WTC11 (cell line): ENCODE measurements at regions of chr15 and their contacts with region 1.

Region 1: GRCh38 chr15:101070502-101071273 is 151.5 kb downstream of the LRRK1 start:
- DNase-seq: no peak
- ATAC-seq: peak; percentile 6; the same call in 1 of the 2 replicates
- H3K4me3 Mint-ChIP-seq: peak overlapping the region; percentile 14; the same call in 1 of the 2 replicates
- H3K27ac Mint-ChIP-seq: peak overlapping the region; percentile 98
- H3K4me1 Mint-ChIP-seq: peaks cover 62% of the 10 kb centered on the region
- H3K27me3 Mint-ChIP-seq: peaks cover 17% of the 10 kb centered on the region
- CTCF ChIP-seq: no peak

Region 2: GRCh38 chr15:101014921-101015841 is 55.5 kb before region 1 on chr15:
- CTCF ChIA-PET with region 1: interaction called, 53 read pairs
- POLR2A ChIA-PET with region 1: no interaction called
- DNase-seq: peak; percentile 87
- ATAC-seq: peak; percentile 81
- H3K4me3 Mint-ChIP-seq: no peak overlapping the region
- H3K27ac Mint-ChIP-seq: no peak overlapping the region
- H3K4me1 Mint-ChIP-seq: peaks cover 53% of the 10 kb centered on the region
- H3K27me3 Mint-ChIP-seq: no peaks in the 10 kb centered on the region; the same call in 1 of the 2 replicates
- CTCF ChIP-seq: peak; percentile 89

Region 3: GRCh38 chr15:101056366-101057334 is 14.0 kb before region 1 on chr15:
- CTCF ChIA-PET with region 1: interaction called, 11 read pairs
- POLR2A ChIA-PET with region 1: no interaction called
- DNase-seq: no peak
- ATAC-seq: no peak
- H3K4me3 Mint-ChIP-seq: no peak overlapping the region
- H3K27ac Mint-ChIP-seq: no peak overlapping the region
- H3K4me1 Mint-ChIP-seq: peaks cover 35% of the 10 kb centered on the region
- H3K27me3 Mint-ChIP-seq: no peaks in the 10 kb centered on the region; the same call in none of the 2 replicates
- CTCF ChIP-seq: no peak

Region 4: DNA sequence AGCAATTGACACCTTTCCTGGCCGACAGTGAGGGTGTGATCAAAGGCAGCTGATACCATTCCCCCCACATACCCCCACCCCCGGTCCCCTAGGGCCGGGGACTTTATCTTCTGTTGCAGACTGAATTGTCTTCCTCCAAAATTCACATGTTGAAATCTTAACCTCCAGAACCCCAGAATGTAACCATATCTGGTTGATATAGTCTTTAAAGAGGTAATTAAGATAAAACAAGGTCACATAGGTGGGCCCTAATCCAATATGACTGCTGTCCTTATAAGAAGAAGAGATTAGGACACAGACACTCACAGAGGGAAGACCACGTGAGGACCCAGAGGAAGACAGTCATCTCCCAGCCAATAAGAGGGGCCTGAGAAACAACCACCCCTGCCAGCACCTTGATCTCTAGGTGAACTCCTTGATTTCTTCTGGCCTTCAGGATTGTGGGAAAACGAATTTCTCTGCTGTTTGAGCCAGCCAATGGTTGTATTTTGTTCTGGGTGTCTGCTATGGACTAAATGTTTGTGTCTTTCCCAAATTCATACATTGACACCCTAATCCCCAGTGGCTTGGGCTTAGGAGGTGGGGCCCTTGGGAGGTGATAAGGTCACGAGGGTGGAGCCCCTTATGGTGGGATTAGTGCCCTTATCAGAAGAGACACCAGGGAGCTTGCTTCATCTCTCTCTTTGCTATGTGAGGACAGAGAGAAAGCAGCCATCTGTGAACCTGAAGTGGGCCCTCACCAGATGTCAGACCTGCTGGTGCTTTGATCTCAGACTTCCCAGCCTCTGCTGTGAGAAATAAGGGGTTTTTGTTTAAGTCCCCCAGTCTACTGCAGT is 37.2 kb after region 1 on chr15:
- CTCF ChIA-PET with region 1: no interaction called
- POLR2A ChIA-PET with region 1: no interaction called
- DNase-seq: no peak
- ATAC-seq: no peak
- H3K4me3 Mint-ChIP-seq: no peak overlapping the region
- H3K27ac Mint-ChIP-seq: no peak overlapping the region
- H3K4me1 Mint-ChIP-seq: peaks cover 15% of the 10 kb centered on the region
- H3K27me3 Mint-ChIP-seq: no peaks in the 10 kb centered on the region
- CTCF ChIP-seq: no peak

Region 5: DNA sequence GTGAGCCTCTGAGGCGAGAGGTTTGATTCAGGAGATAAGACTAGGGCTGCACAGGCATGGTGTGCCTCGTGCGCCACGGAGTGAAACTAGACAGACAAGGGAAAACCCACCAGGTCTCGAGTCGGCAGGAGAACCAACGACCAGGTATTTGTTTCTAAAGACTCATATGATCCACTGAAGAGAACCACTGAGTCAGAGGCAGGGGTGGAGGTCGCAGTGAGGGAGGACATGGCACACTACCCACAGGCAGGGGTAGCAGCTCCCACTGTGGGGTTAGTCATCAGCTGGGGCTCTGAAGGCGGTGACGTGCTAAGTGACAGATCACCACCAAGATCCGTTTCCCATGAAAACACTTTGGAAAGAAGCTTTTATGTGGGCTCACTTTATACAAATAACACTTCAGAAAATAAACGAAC is 135.5 kb after region 1 on chr15:
- CTCF ChIA-PET with region 1: no interaction called
- POLR2A ChIA-PET with region 1: no interaction called
- DNase-seq: no peak
- ATAC-seq: no peak
- H3K4me3 Mint-ChIP-seq: no peak overlapping the region
- H3K27ac Mint-ChIP-seq: peak overlapping the region; percentile 60
- H3K4me1 Mint-ChIP-seq: peaks cover 53% of the 10 kb centered on the region
- H3K27me3 Mint-ChIP-seq: no peaks in the 10 kb centered on the region
- CTCF ChIP-seq: no peak